Ovary (tissue), 10 donors: ENCODE measurements at regions of chr4 and their contacts with region 1.

Region 1: DNA sequence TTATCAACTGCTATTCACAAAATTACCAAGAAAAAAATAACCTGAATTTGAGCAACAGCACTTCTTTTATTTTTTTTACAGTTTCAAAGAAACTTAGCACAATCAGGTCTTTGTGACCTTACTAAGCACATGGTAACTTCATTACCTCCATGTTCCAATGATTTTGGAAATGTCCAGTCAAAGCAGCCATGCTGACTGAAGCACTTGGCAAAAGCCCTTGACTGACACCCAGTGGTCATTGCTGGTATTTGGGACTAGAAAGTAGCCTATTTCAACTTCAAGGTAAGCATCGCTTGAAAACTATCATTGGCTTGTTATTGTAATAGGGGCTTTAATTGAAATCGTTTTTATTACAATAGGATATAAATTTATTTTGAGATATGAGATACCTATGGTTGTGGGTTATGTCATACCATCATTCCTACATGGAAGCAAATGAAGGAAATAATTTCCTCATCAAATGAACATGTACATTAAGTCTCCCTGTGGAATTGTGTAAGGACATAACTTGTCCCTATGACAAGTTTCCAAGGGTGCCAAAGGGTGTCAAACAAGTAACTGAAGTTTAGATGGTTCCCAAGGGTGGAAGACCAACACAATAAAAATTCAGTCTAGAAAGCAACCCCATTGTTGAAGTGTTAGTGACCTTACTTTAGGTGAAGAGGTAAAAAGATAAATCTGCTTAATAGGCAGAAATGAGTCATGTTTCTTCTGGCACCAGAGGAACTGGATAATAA is 15.2 kb upstream of the ANXA10 start:
- DNase-seq: peak in 4 of 5 donors; percentile 9 to 21 (median 15)
- H3K4me3 ChIP-seq: no peak overlapping the region
- H3K27ac ChIP-seq: no peak overlapping the region
- H3K4me1 ChIP-seq: no peaks in the 10 kb centered on the region
- H3K27me3 ChIP-seq: no peaks in the 10 kb centered on the region
- CTCF ChIP-seq: peak in 1 of 3 donors; percentile 18
- EP300 ChIP-seq: no peak
- POLR2A ChIP-seq: no peak

Region 2: DNA sequence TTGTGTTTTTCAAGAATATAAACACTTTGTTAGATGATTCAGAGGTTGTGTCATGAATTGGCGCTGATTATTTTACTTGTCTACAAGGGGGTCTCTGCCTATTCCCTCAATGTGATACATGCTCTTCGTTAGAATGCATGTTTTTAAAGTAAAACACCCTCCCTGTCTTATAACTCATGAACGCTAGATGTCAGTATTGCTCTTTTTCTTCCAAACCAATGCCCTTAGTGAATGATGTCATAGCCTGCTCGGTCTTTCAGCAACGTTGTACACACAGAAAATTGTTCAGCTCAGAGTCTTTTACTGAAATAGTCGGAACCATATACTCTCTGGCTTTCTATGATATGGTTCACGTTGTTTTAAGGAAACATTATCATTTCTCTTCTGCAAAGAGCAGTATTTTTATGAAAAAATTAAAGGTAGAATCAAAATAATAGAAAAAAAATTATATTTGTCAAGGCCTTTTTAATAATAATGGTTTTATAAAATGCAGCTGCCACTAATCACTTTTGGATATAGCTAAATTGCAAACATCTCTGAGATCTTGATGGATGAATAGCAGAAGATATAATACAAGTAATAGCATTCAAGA is 1911.2 kb before region 1 on chr4:
- intact Hi-C with region 1: loop called in 2 of 4 experiments (anchors 10 kb)
- DNase-seq: no peak
- H3K4me3 ChIP-seq: no peak overlapping the region
- H3K27ac ChIP-seq: no peak overlapping the region
- H3K4me1 ChIP-seq: no peaks in the 10 kb centered on the region
- H3K27me3 ChIP-seq: no peaks in the 10 kb centered on the region
- CTCF ChIP-seq: peak; percentile 13 to 46 (median 41)
- EP300 ChIP-seq: no peak
- POLR2A ChIP-seq: no peak

Region 3: DNA sequence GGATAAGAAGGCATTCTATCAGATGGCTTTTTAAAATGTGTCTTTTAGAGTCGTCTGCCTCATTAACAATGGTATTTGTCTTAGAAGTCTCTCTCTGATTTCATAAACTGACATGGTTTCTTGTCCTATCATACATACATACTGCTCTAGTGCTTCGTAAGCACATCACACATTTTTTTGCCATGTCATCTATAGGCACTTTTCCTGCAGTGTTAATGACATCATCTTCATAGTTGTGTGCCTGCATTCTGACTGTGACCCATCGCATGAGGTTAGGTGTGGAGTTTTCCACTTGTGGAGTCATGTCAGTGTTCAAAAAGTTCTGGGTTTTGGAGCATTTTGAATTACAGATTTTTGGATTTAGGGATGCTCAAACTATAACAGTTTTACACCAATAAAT is 481.3 kb before region 1 on chr4:
- intact Hi-C with region 1: no loop called
- DNase-seq: no peak
- H3K4me3 ChIP-seq: no peak overlapping the region
- H3K27ac ChIP-seq: no peak overlapping the region
- H3K4me1 ChIP-seq: no peaks in the 10 kb centered on the region
- H3K27me3 ChIP-seq: no peaks in the 10 kb centered on the region
- CTCF ChIP-seq: no peak
- EP300 ChIP-seq: no peak
- POLR2A ChIP-seq: no peak

Region 4: GRCh38 chr4:167943872-167944505 is 133.2 kb before region 1 on chr4:
- intact Hi-C with region 1: no loop called
- DNase-seq: no peak
- H3K4me3 ChIP-seq: no peak overlapping the region
- H3K27ac ChIP-seq: no peak overlapping the region
- H3K4me1 ChIP-seq: no peaks in the 10 kb centered on the region
- H3K27me3 ChIP-seq: no peaks in the 10 kb centered on the region
- CTCF ChIP-seq: no peak
- EP300 ChIP-seq: no peak
- POLR2A ChIP-seq: no peak

Region 5: DNA sequence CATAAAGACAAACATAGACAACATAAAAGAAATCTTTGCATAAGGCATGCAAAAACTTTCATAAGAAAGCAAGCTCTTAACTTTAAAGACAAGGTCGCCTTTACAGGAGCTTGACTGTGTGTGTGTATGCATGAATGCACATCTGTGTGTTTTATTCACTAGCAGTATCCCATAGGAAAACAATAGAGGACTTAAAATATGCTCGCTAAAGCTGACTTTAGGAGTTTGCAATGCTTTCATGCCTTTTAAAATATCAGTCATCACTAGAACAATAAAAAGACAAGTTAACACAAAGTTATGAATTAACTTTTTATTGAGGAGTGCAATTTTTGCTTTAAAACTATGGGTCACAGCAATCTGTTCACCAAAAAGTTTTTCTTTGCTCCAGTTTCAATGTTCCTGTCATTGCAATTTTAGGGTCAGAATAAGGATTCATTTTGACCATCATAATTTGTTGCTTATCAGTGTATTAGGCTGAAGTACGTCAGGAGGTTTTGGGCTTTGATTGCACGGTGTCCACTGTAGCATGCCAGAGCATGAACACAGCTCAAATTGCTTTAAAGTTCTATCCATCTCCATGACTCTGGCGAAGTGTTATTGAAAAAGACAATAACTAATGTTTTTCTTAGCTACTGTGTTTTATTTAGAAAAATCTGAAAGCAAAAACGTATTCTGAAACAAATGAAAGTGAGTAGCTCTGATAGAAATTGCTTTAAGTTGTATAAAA is 52.1 kb after region 1 on chr4:
- intact Hi-C with region 1: no loop called
- DNase-seq: no peak
- H3K4me3 ChIP-seq: no peak overlapping the region
- H3K27ac ChIP-seq: no peak overlapping the region
- H3K4me1 ChIP-seq: no peaks in the 10 kb centered on the region
- H3K27me3 ChIP-seq: no peaks in the 10 kb centered on the region
- CTCF ChIP-seq: no peak
- EP300 ChIP-seq: no peak
- POLR2A ChIP-seq: no peak

Region 6: GRCh38 chr4:168383510-168383909 is 306.4 kb after region 1 on chr4:
- intact Hi-C with region 1: no loop called
- DNase-seq: no peak
- H3K4me3 ChIP-seq: no peak overlapping the region
- H3K27ac ChIP-seq: no peak overlapping the region
- H3K4me1 ChIP-seq: no peaks in the 10 kb centered on the region
- H3K27me3 ChIP-seq: no peaks in the 10 kb centered on the region
- CTCF ChIP-seq: no peak
- EP300 ChIP-seq: no peak
- POLR2A ChIP-seq: no peak